Mammary epithelial cell (primary cell): ENCODE measurements at regions of chr3 and their contacts with region 1.

Region 1: DNA sequence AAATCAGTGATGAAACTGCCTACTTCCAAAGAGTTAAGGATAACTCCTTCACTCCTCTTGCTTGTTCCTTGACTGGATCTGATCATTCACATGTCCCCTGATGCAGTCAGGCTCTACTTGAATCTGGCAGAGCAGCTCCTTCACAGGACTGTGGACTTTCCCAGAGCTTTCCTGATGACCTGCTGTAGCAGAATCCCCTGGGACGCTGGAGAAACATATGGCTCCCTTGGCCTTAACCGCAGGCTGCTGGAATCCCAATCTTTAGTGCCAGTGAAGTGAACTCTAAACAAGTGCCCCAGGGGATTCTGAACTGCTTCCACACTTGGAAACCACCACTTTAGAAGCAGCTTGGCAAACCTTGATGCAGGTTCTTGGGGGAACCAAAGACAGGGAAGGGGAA is 217.8 kb downstream of the CHST2 start:
- DNase-seq: no peak
- H3K4me3 ChIP-seq: no peak overlapping the region
- H3K27ac ChIP-seq: no peak overlapping the region
- H3K4me1 ChIP-seq: no peaks in the 10 kb centered on the region
- H3K27me3 ChIP-seq: peaks cover 5% of the 10 kb centered on the region
- CTCF ChIP-seq: no peak

Region 2: DNA sequence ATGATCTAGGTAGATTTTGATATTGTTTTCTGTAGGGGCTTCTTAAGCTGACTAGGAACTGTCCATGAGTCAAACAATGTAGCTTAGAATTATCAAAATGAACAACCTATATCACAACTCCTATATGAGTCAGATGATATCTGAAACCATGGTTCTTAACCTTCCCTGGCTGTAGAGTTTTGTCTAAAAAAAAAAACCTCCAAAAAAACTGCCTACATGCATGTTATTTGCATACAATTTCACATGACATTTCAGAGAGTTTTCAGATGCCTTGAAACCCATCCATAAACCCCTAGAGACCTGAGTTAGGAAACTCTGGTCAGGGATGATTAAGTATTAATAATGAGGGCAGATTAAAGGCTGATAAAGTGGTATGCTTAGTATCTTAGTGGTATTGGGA is 60.8 kb before region 1 on chr3:
- CTCF ChIA-PET with region 1: no interaction called
- dilution Hi-C with region 1: no loop called
- in situ Hi-C with region 1: no loop called
- intact Hi-C with region 1: no loop called
- DNase-seq: no peak
- H3K4me3 ChIP-seq: no peak overlapping the region
- H3K27ac ChIP-seq: no peak overlapping the region
- H3K4me1 ChIP-seq: no peaks in the 10 kb centered on the region
- H3K27me3 ChIP-seq: peaks cover 3% of the 10 kb centered on the region
- CTCF ChIP-seq: no peak

Region 3: DNA sequence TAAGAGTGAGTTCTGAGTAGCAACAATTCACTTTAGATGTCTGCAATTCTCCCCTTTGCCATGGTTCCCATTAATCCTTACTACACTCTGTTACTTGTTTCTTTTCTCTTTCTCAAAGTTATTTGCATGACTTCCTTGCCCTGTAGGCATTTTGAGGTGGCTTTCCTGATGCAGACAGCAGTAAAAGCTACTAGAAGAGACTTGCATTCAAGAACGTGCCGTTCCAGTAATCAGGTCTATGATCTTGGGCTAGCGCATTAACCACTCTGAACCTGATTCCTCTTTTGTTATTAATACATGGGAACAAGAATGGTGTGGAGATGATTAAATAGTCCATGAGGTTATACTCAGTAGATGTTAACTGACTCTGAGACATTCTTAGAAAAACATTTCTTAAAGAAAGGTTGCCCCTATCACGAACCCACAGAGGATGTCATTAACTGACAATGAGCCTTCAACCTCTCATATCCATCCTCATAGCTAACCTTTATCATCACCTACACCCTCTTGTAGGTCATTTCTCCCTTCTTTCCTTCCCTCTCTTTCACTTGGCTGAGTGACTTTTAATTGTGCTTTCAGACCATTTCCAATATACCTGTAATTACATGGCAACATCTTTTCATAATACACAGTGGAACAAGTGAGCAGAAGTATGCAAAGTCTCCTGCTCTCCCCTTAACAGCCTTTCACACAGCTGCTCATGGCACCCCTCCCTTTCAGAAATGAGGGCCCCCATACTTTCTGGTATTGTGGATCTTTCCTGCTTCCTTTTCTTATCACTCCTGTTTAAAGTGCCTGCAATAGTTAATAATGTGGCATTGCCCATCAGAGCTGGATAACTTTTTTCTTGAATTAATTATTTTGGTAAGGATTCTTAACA is 41.9 kb before region 1 on chr3:
- CTCF ChIA-PET with region 1: no interaction called
- dilution Hi-C with region 1: loop called (anchors 5 kb)
- in situ Hi-C with region 1: no loop called
- intact Hi-C with region 1: no loop called
- DNase-seq: peak; percentile 31
- H3K4me3 ChIP-seq: no peak overlapping the region
- H3K27ac ChIP-seq: no peak overlapping the region
- H3K4me1 ChIP-seq: peaks cover 6% of the 10 kb centered on the region
- H3K27me3 ChIP-seq: no peaks in the 10 kb centered on the region
- CTCF ChIP-seq: no peak

Region 4: GRCh38 chr3:143525408-143525807 is 188.0 kb after region 1 on chr3:
- CTCF ChIA-PET with region 1: no interaction called
- dilution Hi-C with region 1: no loop called
- in situ Hi-C with region 1: no loop called
- intact Hi-C with region 1: no loop called
- DNase-seq: peak; percentile 13
- H3K4me3 ChIP-seq: no peak overlapping the region
- H3K27ac ChIP-seq: no peak overlapping the region
- H3K4me1 ChIP-seq: no peaks in the 10 kb centered on the region
- H3K27me3 ChIP-seq: no peaks in the 10 kb centered on the region
- CTCF ChIP-seq: no peak

Region 5: DNA sequence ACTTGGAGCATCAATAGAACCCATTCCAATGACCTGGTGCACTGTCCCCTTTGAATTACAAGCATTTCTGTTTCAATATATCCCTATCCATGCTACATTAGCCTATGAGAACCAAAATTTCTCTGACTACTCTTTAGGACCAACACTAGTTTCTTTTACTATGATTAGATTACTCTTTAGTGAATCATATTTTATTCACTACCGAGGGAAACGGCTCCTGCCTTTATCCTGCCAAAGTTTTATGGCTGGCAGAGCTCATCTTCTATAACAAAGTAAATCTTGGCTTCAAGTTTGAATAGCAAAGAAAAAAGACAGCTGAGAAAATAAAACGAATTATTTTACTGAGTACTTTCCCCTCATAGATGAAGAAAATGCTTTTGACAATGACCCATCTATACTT is 390.0 kb after region 1 on chr3:
- CTCF ChIA-PET with region 1: no interaction called
- dilution Hi-C with region 1: no loop called
- in situ Hi-C with region 1: no loop called
- intact Hi-C with region 1: no loop called
- DNase-seq: no peak
- H3K4me3 ChIP-seq: no peak overlapping the region
- H3K27ac ChIP-seq: no peak overlapping the region
- H3K4me1 ChIP-seq: peaks cover 11% of the 10 kb centered on the region
- H3K27me3 ChIP-seq: no peaks in the 10 kb centered on the region
- CTCF ChIP-seq: no peak

Region 6: GRCh38 chr3:143763564-143764162 is 426.3 kb after region 1 on chr3:
- CTCF ChIA-PET with region 1: no interaction called
- dilution Hi-C with region 1: no loop called
- in situ Hi-C with region 1: no loop called
- intact Hi-C with region 1: no loop called
- DNase-seq: no peak
- H3K4me3 ChIP-seq: no peak overlapping the region
- H3K27ac ChIP-seq: no peak overlapping the region
- H3K4me1 ChIP-seq: no peaks in the 10 kb centered on the region
- H3K27me3 ChIP-seq: no peaks in the 10 kb centered on the region
- CTCF ChIP-seq: peak; percentile 54 to 59